Right ventricle myocardium inferior (tissue), 1 donor: ENCODE measurements at regions of chr16 and their contacts with region 1.

Region 1: GRCh38 chr16:24151482-24151939 is 104.6 kb upstream of the CACNG3 start:
- DNase-seq: no peak
- ATAC-seq: no peak

Region 2: DNA sequence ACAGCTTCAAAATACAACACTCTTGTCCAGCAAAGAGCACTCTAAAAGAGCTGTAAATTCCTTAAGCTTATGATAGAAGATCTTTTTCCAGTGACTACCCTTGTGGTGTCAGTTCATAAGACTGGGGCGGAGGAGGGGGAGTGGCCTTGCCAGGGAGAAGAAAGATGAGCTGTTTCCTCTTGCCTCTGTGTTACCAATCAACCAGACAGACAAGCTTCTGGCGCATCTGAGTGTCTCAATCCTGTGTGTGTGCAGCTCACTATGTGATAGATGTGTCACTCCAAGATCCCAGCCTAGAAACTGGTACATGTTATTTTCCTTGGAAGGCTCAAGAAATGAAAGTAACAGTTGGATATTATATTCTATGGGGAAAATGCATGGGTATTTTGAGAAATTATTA is 62.7 kb before region 1 on chr16:
- intact Hi-C with region 1: loop called (anchors 10 kb)
- DNase-seq: no peak
- ATAC-seq: no peak